Activated CD8-positive, alpha-beta T cell treated with anti-CD3 and anti-CD28 coated beads for 36 hours (primary cell): ENCODE measurements at regions of chr7 and their contacts with region 1.

Region 1: DNA sequence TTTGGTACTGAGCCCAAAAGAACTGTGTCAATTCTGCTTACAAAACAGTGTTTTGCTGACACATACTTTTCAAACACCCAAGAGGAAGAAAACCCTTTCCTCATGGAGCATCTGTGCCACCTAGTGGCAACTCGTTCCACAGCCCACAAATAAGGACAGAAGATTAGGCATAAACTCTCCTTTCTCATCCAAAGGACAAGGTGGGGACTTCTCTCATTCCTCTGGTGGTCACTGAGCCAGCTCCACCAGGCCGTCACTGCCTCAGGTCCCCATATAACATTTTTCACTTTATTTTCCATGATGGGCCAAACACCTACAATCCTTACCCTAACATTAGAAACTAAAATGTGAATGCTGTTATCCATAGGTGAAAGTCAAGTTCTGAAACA is 76.9 kb downstream of the RNF216 start:
- DNase-seq: peak; percentile 87
- ATAC-seq: no peak
- H3K4me3 Mint-ChIP-seq: no peak overlapping the region
- H3K27ac Mint-ChIP-seq: no peak overlapping the region
- H3K4me1 Mint-ChIP-seq: peaks cover 80% of the 10 kb centered on the region
- H3K27me3 Mint-ChIP-seq: no peaks in the 10 kb centered on the region
- CTCF ChIP-seq: peak; percentile 85

Region 2: DNA sequence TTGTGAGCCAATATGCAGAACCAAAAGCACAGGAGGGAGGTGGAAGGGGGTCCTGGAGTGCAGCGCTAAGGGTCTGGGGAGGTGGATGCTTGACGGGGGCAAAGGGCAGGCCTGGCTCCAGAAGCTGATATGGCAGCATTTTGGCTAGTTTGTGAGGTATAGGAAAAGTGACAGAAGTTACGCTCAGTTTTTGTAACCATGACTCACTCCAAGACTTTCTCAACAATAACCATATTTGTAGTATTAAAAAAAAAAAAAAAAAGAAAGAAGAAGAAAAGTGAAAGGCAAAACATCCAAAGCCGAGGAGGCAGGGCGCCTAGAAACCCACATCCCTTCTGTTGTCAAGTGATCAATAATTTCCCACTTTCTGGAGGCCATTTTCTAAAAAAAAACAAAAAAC is 15.4 kb before region 1 on chr7:
- CTCF ChIA-PET with region 1: interaction called, 41 read pairs
- POLR2A ChIA-PET with region 1: interaction called, 79 read pairs
- intact Hi-C with region 1: no loop called
- DNase-seq: peak; percentile 87
- ATAC-seq: peak; percentile 65
- H3K4me3 Mint-ChIP-seq: peak overlapping the region; percentile 57
- H3K27ac Mint-ChIP-seq: peak overlapping the region; percentile 97
- H3K4me1 Mint-ChIP-seq: peaks cover 93% of the 10 kb centered on the region
- H3K27me3 Mint-ChIP-seq: no peaks in the 10 kb centered on the region
- CTCF ChIP-seq: no peak